Activated T-helper 1 cell treated with anti-CD3 and anti-CD28 coated beads, Interleukin-12 subunit alpha, Interleukin-12 subunit beta, Interleukin-2, Interleukin-4 antibody, amounts not matched to agents 30 ng/mL and 10 ng/mL and 1 ng/mL, durations not matched to agents 14 hours and 24 hours and 36 hours (primary cell): ENCODE measurements at regions of chr22 and their contacts with region 1.

Region 1: DNA sequence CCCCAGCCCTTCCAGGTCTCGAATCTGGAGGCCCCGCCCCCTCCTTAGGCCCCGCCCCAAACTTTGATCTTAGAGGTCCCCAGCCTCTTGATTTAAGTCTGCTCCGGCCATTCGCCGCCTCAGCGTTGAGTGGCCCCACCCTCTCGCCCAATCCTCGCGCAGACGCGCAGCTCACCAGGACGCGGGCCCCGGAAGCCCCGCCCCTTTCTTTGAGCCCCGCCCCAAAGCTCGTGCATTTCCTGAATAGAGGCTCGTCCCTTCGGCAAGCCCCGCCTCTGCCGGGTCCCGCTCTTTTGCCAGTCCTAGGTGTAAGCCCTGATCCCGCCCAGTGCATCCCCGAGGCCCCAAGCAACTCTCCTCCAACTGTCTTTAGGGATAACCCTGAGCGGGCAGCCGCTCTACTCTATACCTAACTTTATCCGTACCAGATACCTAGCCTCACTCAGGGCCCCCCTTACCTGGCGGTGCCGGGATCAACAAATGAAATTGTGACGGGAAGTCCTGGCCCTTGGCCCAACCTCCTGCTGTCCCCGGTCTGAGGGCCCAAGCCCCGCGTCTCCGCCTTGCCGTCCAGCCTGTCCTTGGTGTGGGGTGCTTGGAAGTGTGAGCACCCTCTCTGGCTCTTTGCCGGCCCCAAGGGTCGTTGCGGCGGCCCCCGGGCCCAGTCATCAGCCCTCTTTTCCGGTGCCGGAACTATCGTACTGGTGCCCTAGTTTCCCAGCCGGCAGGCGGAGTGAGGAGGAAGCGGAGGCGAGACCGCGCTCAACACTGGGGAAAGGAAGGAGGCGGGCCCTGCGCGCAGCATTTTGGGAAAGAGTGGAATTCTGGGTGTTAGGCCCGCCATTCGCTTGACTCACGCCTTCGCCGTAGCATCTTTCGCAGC is at the start of gene SNRPD3:
- DNase-seq: peak; percentile 97
- H3K4me3 Mint-ChIP-seq: peak within 1 kb of the TSS; percentile 98
- H3K27ac Mint-ChIP-seq: peak within 1 kb of the TSS; percentile 97
- H3K4me1 Mint-ChIP-seq: peaks cover 64% of the 10 kb centered on the region
- H3K27me3 Mint-ChIP-seq: no peaks in the 10 kb centered on the region
- total RNA-seq, gene SNRPD3: 155 and 158 TPM in 2 replicates

Region 2: GRCh38 chr22:23716811-23717801 is 838.3 kb before region 1 on chr22:
- intact Hi-C with region 1: loop called (anchors 2 kb)
- DNase-seq: peak; percentile 81
- H3K4me3 Mint-ChIP-seq: peak overlapping the region; percentile 79
- H3K27ac Mint-ChIP-seq: peak overlapping the region; percentile 79
- H3K4me1 Mint-ChIP-seq: peaks cover 8% of the 10 kb centered on the region
- H3K27me3 Mint-ChIP-seq: peaks cover 3% of the 10 kb centered on the region

Region 3: GRCh38 chr22:23893943-23894709 is 661.3 kb before region 1 on chr22 and contains the start of gene MIF:
- intact Hi-C with region 1: loop called (anchors 2 kb)
- DNase-seq: peak; percentile 99
- H3K4me3 Mint-ChIP-seq: peak within 1 kb of the TSS; percentile 98
- H3K27ac Mint-ChIP-seq: peak within 1 kb of the TSS; percentile 99
- H3K4me1 Mint-ChIP-seq: peaks cover 22% of the 10 kb centered on the region
- H3K27me3 Mint-ChIP-seq: no peaks in the 10 kb centered on the region
- total RNA-seq, gene MIF: 1,136 and 1,212 TPM in 2 replicates

Region 4: GRCh38 chr22:24270638-24271408 is 284.6 kb before region 1 on chr22 and contains the start of gene SPECC1L:
- intact Hi-C with region 1: loop called (anchors 1 kb)
- DNase-seq: peak; percentile 92
- H3K4me3 Mint-ChIP-seq: peak within 1 kb of the TSS; percentile 85
- H3K27ac Mint-ChIP-seq: peak within 1 kb of the TSS; percentile 82
- H3K4me1 Mint-ChIP-seq: peaks cover 35% of the 10 kb centered on the region
- H3K27me3 Mint-ChIP-seq: no peaks in the 10 kb centered on the region
- total RNA-seq, gene SPECC1L: 40.3 and 40.4 TPM in 2 replicates

Region 5: DNA sequence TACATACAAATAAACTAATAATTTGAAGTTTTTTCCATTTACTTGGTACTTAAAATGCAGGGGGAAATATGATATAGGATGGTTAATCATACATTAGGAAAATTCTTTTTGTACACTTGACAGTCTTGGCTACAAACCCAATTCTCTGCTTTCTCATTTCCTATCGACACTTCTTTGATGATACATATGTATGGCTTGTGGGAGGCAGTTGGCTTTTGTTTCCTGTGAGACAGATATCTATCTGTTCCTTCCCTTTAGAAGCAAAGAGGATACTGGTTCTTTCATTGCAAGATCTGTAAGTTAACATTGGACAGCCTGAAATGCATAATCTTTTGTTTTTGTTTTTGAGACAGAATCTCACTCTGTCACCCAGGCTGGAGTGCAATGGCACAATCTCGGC is 175.9 kb before region 1 on chr22:
- intact Hi-C with region 1: no loop called
- DNase-seq: no peak
- H3K4me3 Mint-ChIP-seq: no peak overlapping the region
- H3K27ac Mint-ChIP-seq: peak overlapping the region; percentile 35
- H3K4me1 Mint-ChIP-seq: peaks cover 30% of the 10 kb centered on the region
- H3K27me3 Mint-ChIP-seq: no peaks in the 10 kb centered on the region

Region 6: DNA sequence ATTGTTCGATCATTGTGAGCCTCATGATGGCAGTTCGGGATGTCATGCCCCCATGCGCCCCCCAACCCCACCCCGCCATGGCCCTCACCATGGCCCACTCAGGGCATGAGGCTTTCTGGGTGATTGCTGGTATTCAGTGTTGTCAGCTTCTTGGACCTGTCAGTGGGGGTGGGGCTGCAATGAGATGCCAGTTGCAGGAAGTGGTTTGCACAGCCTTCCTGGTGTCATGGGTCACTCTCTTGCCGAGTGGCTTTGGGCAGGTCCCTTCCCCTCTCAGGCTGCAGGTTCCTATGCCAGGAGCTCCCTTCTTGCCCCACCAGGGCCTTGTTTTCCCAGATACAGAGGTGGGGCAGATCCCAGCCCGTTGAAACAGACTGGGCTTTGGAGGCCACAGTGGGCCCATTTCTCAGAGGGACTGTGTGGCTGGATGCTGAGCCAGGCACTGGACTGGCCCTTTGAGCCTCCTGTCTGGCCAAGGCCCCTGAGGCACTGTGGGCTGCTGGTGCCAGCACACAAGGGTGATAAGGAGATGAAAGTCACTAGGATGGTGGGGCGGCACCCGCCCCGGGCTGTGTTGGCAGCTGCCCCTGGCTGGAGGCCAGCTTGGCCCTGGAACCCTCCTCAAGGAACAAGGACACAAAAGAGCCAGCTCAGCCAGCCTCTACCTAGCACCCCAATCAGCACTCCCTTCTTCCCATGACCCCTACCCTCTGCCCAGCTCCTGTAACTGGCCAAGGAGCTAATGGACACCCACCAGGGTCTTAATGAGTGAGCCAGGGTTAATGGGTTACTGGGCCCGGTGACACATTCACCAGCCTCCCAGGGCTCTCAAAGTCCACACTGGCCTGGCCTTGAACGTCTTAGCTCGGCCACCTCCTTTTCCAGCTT is 46.1 kb after region 1 on chr22:
- intact Hi-C with region 1: loop called (anchors 2 kb)
- DNase-seq: no peak
- H3K4me3 Mint-ChIP-seq: no peak overlapping the region
- H3K27ac Mint-ChIP-seq: no peak overlapping the region
- H3K4me1 Mint-ChIP-seq: peaks cover 33% of the 10 kb centered on the region
- H3K27me3 Mint-ChIP-seq: no peaks in the 10 kb centered on the region